Activated CD4-positive, alpha-beta memory T cell treated with anti-CD3 and anti-CD28 coated beads, Interleukin-2, amount 10 ng/mL, durations not matched to agents 7 days and 5 days (primary cell): ENCODE measurements at regions of chr15 and their contacts with region 1.

Region 1: DNA sequence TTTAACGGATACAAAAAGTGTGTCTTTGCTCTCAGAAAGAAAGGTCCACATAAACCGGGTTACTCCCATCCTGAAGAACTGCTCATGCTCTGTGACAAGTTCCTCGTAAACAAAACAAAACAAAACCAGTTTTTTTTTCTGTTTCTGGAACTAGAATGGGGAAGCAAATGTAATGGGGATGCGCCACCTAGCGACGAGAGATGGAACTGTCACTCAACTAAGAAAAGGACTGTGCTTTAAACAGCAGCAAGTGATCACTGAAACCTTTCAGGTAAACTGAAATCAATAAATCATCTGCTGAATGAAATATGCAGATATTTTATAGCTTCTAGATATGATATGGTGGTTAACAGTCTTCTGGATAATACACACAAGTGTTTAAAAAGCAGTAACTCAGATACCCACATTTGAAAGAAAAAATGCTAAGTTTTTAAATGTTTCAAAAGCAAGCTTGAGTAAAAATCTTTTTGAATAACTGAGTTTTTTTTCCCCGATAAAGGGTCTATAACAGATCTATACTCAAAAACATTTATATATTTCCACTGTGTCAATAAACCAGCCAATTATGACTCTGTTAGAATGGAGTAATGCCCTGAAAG is 10.9 kb downstream of the TM2D3 start:
- DNase-seq: peak; percentile 86
- H3K4me3 Mint-ChIP-seq: peak overlapping the region; percentile 36
- H3K27ac Mint-ChIP-seq: peak overlapping the region; percentile 84
- H3K4me1 Mint-ChIP-seq: peaks cover 28% of the 10 kb centered on the region
- H3K27me3 Mint-ChIP-seq: no peaks in the 10 kb centered on the region

Region 2: GRCh38 chr15:101288908-101289513 is 352.3 kb before region 1 on chr15:
- CTCF ChIA-PET with region 1: interaction called, 48 read pairs
- POLR2A ChIA-PET with region 1: interaction called, 43 read pairs
- DNase-seq: no peak
- H3K4me3 Mint-ChIP-seq: no peak overlapping the region
- H3K27ac Mint-ChIP-seq: peak overlapping the region; percentile 16
- H3K4me1 Mint-ChIP-seq: peaks cover 55% of the 10 kb centered on the region
- H3K27me3 Mint-ChIP-seq: no peaks in the 10 kb centered on the region

Region 3: DNA sequence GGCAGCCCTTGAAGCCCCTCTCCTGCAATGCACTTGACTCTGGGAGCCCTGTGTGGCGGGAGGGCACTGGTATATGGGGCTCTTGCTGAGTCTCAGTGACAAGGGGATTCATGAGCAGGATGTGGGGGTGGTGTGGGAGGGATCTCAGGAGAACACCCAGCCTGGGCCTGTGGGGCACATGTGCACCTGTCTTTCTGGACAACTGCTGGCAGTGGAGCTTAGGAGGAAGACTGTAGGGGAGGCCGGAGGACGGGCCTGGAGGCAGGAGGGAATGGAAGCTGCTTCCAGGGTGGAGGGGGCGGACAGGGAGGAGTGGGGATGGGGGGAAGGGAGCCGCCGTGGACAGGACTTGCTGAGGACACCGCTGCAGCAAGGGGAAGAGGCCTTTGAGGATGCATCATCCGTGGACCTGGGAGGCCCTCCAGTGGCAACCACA is 335.4 kb before region 1 on chr15:
- CTCF ChIA-PET with region 1: interaction called, 35 read pairs
- POLR2A ChIA-PET with region 1: no interaction called
- DNase-seq: no peak
- H3K4me3 Mint-ChIP-seq: no peak overlapping the region
- H3K27ac Mint-ChIP-seq: no peak overlapping the region
- H3K4me1 Mint-ChIP-seq: no peaks in the 10 kb centered on the region
- H3K27me3 Mint-ChIP-seq: no peaks in the 10 kb centered on the region

Region 4: DNA sequence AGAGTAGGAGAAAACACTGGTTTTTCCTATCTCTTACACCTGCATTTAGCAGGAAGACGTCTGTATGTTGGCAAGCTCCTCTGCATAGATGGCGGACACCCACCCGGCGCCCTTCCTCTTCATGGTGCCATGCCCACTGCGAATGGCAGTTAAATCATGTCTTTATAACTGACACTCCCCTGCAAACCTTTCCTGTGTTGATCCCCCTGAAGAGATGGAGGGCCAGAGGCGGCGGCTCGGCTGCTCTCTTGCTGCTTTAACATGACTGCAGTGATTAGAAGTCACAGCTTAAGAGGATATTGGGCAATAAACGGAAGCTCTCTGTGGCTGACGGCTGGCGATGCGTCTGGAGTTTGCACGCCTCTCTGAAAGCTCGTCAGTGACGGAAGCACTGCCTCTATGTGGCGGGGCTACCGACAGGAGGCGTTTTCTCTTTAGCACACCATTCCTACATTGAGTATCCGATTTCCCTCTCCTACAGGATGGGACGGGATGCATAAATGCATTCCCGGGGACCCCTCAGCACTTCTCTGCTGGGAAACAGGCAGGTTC is 320.7 kb before region 1 on chr15:
- CTCF ChIA-PET with region 1: interaction called, 24 read pairs
- POLR2A ChIA-PET with region 1: no interaction called
- DNase-seq: peak; percentile 84
- H3K4me3 Mint-ChIP-seq: peak overlapping the region; percentile 69
- H3K27ac Mint-ChIP-seq: peak overlapping the region; percentile 83
- H3K4me1 Mint-ChIP-seq: peaks cover 16% of the 10 kb centered on the region
- H3K27me3 Mint-ChIP-seq: peaks cover 1% of the 10 kb centered on the region

Region 5: GRCh38 chr15:101501703-101502373 is 139.4 kb before region 1 on chr15:
- CTCF ChIA-PET with region 1: interaction called, 22 read pairs
- POLR2A ChIA-PET with region 1: no interaction called
- DNase-seq: peak; percentile 55
- H3K4me3 Mint-ChIP-seq: peak overlapping the region; percentile 40
- H3K27ac Mint-ChIP-seq: no peak overlapping the region
- H3K4me1 Mint-ChIP-seq: peaks cover 44% of the 10 kb centered on the region
- H3K27me3 Mint-ChIP-seq: peaks cover 16% of the 10 kb centered on the region

Region 6: GRCh38 chr15:101652098-101652782 is 11.0 kb after region 1 on chr15 and contains the start of gene TM2D3:
- CTCF ChIA-PET with region 1: interaction called, 18 read pairs
- POLR2A ChIA-PET with region 1: interaction called, 15 read pairs
- DNase-seq: peak; percentile 96
- H3K4me3 Mint-ChIP-seq: peak within 1 kb of the TSS; percentile 91
- H3K27ac Mint-ChIP-seq: peak within 1 kb of the TSS; percentile 97
- H3K4me1 Mint-ChIP-seq: peaks cover 43% of the 10 kb centered on the region
- H3K27me3 Mint-ChIP-seq: no peaks in the 10 kb centered on the region
- total RNA-seq, gene TM2D3: 41.8 to 43.8 TPM